MCF 10A (cell line): ENCODE measurements at regions of chr3 and their contacts with region 1.

Region 1: GRCh38 chr3:169295126-169295525 is 368.4 kb downstream of the MECOM start:
- DNase-seq: peak; percentile 33
- H3K4me3 Mint-ChIP-seq: no peak overlapping the region
- H3K27ac Mint-ChIP-seq: no peak overlapping the region
- H3K4me1 Mint-ChIP-seq: no peaks in the 10 kb centered on the region
- H3K27me3 Mint-ChIP-seq: no peaks in the 10 kb centered on the region
- CTCF ChIP-seq: peak; percentile 52

Region 2: GRCh38 chr3:169122416-169122815 is 172.7 kb before region 1 on chr3:
- CTCF ChIA-PET with region 1: no interaction called
- POLR2A ChIA-PET with region 1: no interaction called
- intact Hi-C with region 1: no loop called
- DNase-seq: no peak
- H3K4me3 Mint-ChIP-seq: no peak overlapping the region
- H3K27ac Mint-ChIP-seq: no peak overlapping the region
- H3K4me1 Mint-ChIP-seq: no peaks in the 10 kb centered on the region
- H3K27me3 Mint-ChIP-seq: no peaks in the 10 kb centered on the region
- CTCF ChIP-seq: no peak

Region 3: DNA sequence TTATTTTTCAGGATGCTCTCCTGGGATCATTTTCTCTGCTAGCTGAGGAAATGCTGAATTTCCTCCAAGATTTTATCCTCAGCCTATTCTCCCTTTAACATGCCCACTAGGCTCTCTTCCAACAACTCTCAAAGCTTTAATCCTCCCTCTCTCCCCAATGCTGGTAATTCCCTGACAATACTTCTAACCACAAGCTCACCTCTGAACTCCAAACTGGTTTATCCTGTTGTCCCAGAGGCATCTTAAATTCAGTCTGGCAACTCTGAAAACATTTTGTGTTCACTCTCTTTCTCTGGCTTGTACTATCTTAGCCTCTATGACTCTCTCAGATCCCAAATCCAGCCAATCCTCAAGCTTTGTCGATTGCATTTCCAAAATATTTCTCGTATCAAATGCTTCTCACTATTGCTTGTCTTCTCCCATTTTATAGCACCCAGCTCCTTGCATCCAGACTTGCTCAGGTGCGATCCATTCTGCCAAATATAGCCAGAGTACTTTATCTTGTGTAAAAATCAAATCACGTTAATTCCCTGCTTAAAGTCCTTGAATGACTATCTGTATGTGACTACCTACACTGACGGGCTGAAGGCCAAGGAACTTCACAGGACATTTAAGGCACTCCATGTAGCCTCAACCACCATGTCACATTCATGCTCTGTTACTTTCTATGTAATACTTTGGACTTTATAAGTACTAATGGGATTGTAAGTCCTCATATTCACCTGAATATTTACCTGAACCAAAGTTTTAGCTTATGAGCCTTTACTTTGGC is 121.7 kb before region 1 on chr3:
- CTCF ChIA-PET with region 1: no interaction called
- POLR2A ChIA-PET with region 1: no interaction called
- intact Hi-C with region 1: no loop called
- DNase-seq: no peak
- H3K4me3 Mint-ChIP-seq: no peak overlapping the region
- H3K27ac Mint-ChIP-seq: no peak overlapping the region
- H3K4me1 Mint-ChIP-seq: peaks cover 18% of the 10 kb centered on the region
- H3K27me3 Mint-ChIP-seq: no peaks in the 10 kb centered on the region
- CTCF ChIP-seq: no peak

Region 4: GRCh38 chr3:169390271-169391230 is 95.4 kb after region 1 on chr3:
- CTCF ChIA-PET with region 1: interaction called, 9 read pairs
- POLR2A ChIA-PET with region 1: no interaction called
- intact Hi-C with region 1: loop called (anchors 2 kb)
- DNase-seq: peak; percentile 21
- H3K4me3 Mint-ChIP-seq: no peak overlapping the region
- H3K27ac Mint-ChIP-seq: no peak overlapping the region
- H3K4me1 Mint-ChIP-seq: no peaks in the 10 kb centered on the region
- H3K27me3 Mint-ChIP-seq: no peaks in the 10 kb centered on the region
- CTCF ChIP-seq: peak; percentile 9

Region 5: DNA sequence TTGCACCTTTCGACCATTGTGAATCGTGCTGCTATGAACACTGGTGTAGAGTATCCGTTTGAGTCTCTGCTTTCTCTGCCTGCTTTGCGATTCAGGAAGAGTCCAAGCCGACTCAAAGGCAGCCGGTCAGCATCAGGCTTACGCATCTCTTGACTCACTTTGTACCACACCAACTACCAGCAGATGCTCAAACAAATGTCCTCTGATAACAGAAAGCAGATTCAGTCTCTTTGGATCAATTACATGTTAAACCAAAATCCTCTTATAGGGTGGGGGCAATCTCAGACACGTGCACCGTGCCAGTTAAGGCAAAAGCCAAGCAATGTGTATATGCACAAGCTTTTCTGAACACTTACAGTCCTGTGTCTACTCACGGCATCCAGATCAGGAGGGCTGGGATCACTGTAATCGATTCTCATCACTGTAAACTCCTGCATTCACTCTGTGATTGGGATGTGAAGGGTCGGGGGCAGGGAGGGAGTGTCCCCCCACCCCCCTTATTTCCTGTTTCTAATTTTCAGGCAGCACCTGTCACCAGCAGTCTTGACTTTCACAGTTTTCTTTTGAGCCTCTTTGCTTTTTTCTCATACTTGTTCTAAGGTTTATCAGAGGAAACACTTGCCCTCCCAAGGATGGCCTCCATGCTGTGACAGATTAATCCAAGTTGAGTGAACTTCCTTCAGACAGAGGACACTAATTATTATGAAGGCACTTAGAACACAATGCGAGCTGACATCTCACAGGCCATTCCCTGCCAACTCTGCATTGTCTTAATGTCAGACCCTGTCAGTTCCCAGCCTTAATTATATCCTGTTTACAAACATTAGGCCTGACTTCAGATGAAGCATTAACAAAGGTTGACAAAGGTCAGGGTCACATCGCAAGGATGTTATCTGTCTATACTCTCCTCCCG is 214.9 kb after region 1 on chr3:
- CTCF ChIA-PET with region 1: interaction called, 5 read pairs
- POLR2A ChIA-PET with region 1: no interaction called
- intact Hi-C with region 1: loop called (anchors 2 kb)
- DNase-seq: no peak
- H3K4me3 Mint-ChIP-seq: no peak overlapping the region
- H3K27ac Mint-ChIP-seq: no peak overlapping the region
- H3K4me1 Mint-ChIP-seq: no peaks in the 10 kb centered on the region
- H3K27me3 Mint-ChIP-seq: no peaks in the 10 kb centered on the region
- CTCF ChIP-seq: no peak

Region 6: GRCh38 chr3:169542331-169542751 is 247.2 kb after region 1 on chr3:
- CTCF ChIA-PET with region 1: no interaction called
- POLR2A ChIA-PET with region 1: no interaction called
- intact Hi-C with region 1: no loop called
- DNase-seq: no peak
- H3K4me3 Mint-ChIP-seq: no peak overlapping the region
- H3K27ac Mint-ChIP-seq: no peak overlapping the region
- H3K4me1 Mint-ChIP-seq: peaks cover 8% of the 10 kb centered on the region
- H3K27me3 Mint-ChIP-seq: no peaks in the 10 kb centered on the region
- CTCF ChIP-seq: no peak

Region 7: GRCh38 chr3:169575373-169575772 is 280.2 kb after region 1 on chr3:
- CTCF ChIA-PET with region 1: interaction called, 3 read pairs
- POLR2A ChIA-PET with region 1: no interaction called
- intact Hi-C with region 1: loop called (anchors 10 kb)
- DNase-seq: peak; percentile 74
- H3K4me3 Mint-ChIP-seq: peak overlapping the region; percentile 22
- H3K27ac Mint-ChIP-seq: no peak overlapping the region
- H3K4me1 Mint-ChIP-seq: peaks cover 8% of the 10 kb centered on the region
- H3K27me3 Mint-ChIP-seq: no peaks in the 10 kb centered on the region
- CTCF ChIP-seq: no peak